Cardiac septum (tissue), 1 donor: ENCODE measurements at regions of chr6 and their contacts with region 1.

Region 1: DNA sequence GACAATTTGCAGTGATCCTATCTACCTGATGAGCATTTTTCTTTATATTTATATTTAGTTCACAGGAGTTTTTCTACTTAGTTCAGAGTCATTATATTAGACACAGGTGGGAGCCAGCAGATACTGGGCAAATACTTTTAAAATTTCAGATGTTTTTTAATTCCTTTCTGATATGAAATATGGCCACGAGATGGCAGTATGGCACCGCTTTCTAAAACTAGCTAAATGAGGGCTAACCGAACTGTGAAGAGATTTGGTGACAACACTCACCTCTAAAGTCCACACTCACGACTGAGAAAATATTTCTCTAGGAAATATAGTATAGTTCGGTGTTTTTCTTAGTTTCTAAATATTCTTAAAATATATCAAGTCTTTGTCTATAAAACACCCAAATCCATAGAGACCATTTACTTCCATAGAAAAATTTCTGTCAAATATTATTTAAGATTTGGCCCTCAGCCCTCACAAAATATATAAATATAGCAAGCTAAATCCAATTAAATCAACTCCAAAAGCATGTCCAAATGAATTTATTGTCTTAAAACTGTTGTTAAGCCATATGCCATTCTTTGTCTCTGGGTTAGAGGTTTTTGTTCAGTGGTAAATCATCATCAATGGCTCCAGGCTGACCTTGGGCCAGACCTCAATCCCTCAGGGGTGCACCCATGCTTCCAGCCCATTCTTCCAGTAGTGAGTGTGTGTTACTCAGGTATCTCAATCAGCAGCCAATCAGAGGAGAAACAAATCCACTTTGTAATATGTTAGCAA is 63.6 kb downstream of the HUS1B start:
- DNase-seq: no peak

Region 2: DNA sequence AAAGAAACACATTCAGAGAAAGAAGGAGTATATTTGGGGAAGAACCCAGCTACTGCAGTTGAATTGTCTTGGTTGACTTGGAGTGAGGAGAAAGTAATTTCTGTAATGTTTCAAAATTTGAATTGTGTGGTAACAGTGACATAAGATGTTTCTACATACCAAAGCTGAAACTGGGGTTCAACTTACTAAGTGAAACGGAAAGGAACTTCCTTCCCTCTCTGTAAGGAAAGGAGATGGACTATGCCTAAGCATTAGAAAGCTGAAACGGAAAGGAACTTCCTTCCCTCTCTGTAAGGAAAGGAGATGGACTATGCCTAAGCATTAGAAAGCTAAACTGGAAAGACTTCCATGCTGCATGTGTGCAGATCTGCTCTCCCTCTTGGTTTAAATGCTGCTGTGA is 17.6 kb after region 1 on chr6:
- intact Hi-C with region 1: no loop called
- DNase-seq: no peak

Region 3: GRCh38 chr6:722077-722524 is 128.8 kb after region 1 on chr6:
- intact Hi-C with region 1: loop called (anchors 10 kb)
- DNase-seq: peak; percentile 81

Region 4: GRCh38 chr6:786946-787763 is 193.8 kb after region 1 on chr6:
- intact Hi-C with region 1: loop called (anchors 10 kb)
- DNase-seq: no peak

Region 5: GRCh38 chr6:1396952-1397868 is 803.9 kb after region 1 on chr6:
- intact Hi-C with region 1: loop called (anchors 10 kb)
- DNase-seq: no peak